GM12878 (cell line): ENCODE measurements at regions of chr16 and their contacts with region 1.

Region 1: DNA sequence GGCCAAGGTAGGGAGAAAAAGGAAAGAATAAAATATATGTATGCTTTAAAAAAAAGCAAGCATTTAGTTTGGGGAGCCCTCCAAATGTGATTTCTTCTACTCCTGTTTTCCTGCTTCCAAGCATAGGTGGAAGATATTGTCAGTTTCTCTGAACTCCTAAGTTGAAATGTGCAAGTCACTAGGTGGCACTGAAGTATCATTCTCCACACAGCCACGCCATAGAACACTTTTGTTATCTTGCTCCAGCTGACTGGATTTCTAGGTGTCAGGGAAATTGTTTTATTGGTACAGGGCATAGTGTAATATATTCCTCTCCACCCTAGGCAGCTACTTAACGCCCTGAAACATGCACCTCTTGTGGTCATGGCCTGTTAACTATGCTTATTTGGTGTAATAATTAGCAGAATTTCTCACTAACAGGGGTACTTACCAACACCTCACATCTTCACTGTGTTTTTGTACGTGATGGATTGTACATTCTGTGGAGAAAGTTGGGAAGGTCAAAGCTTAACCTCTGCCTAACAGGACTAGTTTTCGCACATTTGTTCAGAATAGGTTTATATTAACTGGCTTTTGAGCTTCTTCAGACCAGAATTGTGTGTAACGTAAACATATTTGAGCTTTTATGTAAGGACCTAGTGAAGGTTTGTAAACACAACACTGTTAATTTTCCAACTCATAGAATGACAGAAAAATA is 69.3 kb downstream of the FTO start:
- DNase-seq: peak; percentile 13
- ATAC-seq: peak; percentile 79
- H3K4me3 ChIP-seq: no peak overlapping the region
- H3K27ac ChIP-seq: no peak overlapping the region
- H3K4me1 ChIP-seq: peaks cover 6% of the 10 kb centered on the region
- H3K27me3 ChIP-seq: no peaks in the 10 kb centered on the region
- CTCF ChIP-seq: peak; percentile 41 to 70 (median 50); a peak in 4 of 6 replicates
- EP300 ChIP-seq: no peak
- POLR2A ChIP-seq: no peak
- RAD21 ChIP-seq: peak; percentile 84

Region 2: GRCh38 chr16:53369921-53370320 is 403.4 kb before region 1 on chr16:
- CTCF ChIA-PET with region 1: no interaction called
- POLR2A ChIA-PET with region 1: no interaction called
- RAD21 ChIA-PET with region 1: no interaction called
- SMC1A ChIA-PET with region 1: no interaction called
- in situ Hi-C with region 1: no loop called
- intact Hi-C with region 1: no loop called
- DNase-seq: no peak
- ATAC-seq: no peak
- H3K4me3 ChIP-seq: no peak overlapping the region
- H3K27ac ChIP-seq: no peak overlapping the region
- H3K4me1 ChIP-seq: no peaks in the 10 kb centered on the region
- H3K27me3 ChIP-seq: no peaks in the 10 kb centered on the region; a peak in 1 of 4 replicates
- CTCF ChIP-seq: no peak
- EP300 ChIP-seq: no peak
- POLR2A ChIP-seq: no peak
- RAD21 ChIP-seq: no peak

Region 3: DNA sequence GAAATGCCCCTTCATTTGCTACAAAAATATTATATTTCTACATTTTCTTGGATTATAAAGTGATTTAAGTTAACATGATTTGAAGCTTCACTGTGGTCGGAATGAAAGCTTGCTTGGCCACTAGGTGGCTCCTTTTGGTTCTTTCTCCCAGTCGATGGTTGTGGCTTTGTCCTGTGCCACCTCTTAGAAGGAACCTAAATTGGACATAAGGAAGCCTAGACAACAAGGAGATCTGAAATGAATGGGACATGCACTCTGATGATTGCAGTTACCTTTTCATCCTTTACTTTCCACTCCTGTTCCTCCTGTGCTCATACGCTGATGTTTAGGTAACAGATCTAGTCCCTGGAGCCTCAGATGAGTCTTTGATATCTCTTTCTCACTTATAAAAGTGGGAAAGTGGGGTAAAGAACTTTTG is 30.1 kb before region 1 on chr16:
- CTCF ChIA-PET with region 1: interaction called, 19 read pairs
- POLR2A ChIA-PET with region 1: no interaction called
- RAD21 ChIA-PET with region 1: no interaction called
- SMC1A ChIA-PET with region 1: interaction called, 9 read pairs
- in situ Hi-C with region 1: no loop called
- intact Hi-C with region 1: no loop called
- DNase-seq: no peak
- ATAC-seq: peak; percentile 67
- H3K4me3 ChIP-seq: no peak overlapping the region
- H3K27ac ChIP-seq: no peak overlapping the region
- H3K4me1 ChIP-seq: peaks cover 4% of the 10 kb centered on the region
- H3K27me3 ChIP-seq: no peaks in the 10 kb centered on the region
- CTCF ChIP-seq: peak; percentile 47 to 70 (median 69)
- EP300 ChIP-seq: no peak
- POLR2A ChIP-seq: no peak
- RAD21 ChIP-seq: peak; percentile 39

Region 4: GRCh38 chr16:53755536-53755910 is 17.8 kb before region 1 on chr16:
- CTCF ChIA-PET with region 1: interaction called, 13 read pairs
- POLR2A ChIA-PET with region 1: no interaction called
- RAD21 ChIA-PET with region 1: interaction called, 3 read pairs
- SMC1A ChIA-PET with region 1: interaction called, 5 read pairs
- in situ Hi-C with region 1: no loop called
- intact Hi-C with region 1: no loop called
- DNase-seq: no peak
- ATAC-seq: no peak
- H3K4me3 ChIP-seq: no peak overlapping the region
- H3K27ac ChIP-seq: no peak overlapping the region
- H3K4me1 ChIP-seq: no peaks in the 10 kb centered on the region
- H3K27me3 ChIP-seq: no peaks in the 10 kb centered on the region
- CTCF ChIP-seq: no peak
- EP300 ChIP-seq: no peak
- POLR2A ChIP-seq: no peak
- RAD21 ChIP-seq: no peak

Region 5: GRCh38 chr16:53785044-53785443 is 11.7 kb after region 1 on chr16:
- CTCF ChIA-PET with region 1: interaction called, 6 read pairs
- POLR2A ChIA-PET with region 1: no interaction called
- RAD21 ChIA-PET with region 1: interaction called, 3 read pairs
- SMC1A ChIA-PET with region 1: interaction called, 10 read pairs
- in situ Hi-C with region 1: no loop called
- intact Hi-C with region 1: no loop called
- DNase-seq: no peak
- ATAC-seq: no peak
- H3K4me3 ChIP-seq: no peak overlapping the region
- H3K27ac ChIP-seq: no peak overlapping the region
- H3K4me1 ChIP-seq: no peaks in the 10 kb centered on the region
- H3K27me3 ChIP-seq: no peaks in the 10 kb centered on the region
- CTCF ChIP-seq: no peak
- EP300 ChIP-seq: no peak
- POLR2A ChIP-seq: no peak
- RAD21 ChIP-seq: no peak

Region 6: GRCh38 chr16:53892155-53892554 is 118.9 kb after region 1 on chr16:
- CTCF ChIA-PET with region 1: interaction called, 9 read pairs
- POLR2A ChIA-PET with region 1: no interaction called
- RAD21 ChIA-PET with region 1: interaction called, 4 read pairs
- SMC1A ChIA-PET with region 1: no interaction called
- in situ Hi-C with region 1: no loop called
- intact Hi-C with region 1: loop called (anchors 5 kb)
- DNase-seq: no peak
- ATAC-seq: peak; percentile 82
- H3K4me3 ChIP-seq: no peak overlapping the region
- H3K27ac ChIP-seq: no peak overlapping the region
- H3K4me1 ChIP-seq: no peaks in the 10 kb centered on the region
- H3K27me3 ChIP-seq: no peaks in the 10 kb centered on the region
- CTCF ChIP-seq: peak; percentile 52 to 61 (median 59)
- EP300 ChIP-seq: no peak
- POLR2A ChIP-seq: no peak
- RAD21 ChIP-seq: peak; percentile 71

Region 7: DNA sequence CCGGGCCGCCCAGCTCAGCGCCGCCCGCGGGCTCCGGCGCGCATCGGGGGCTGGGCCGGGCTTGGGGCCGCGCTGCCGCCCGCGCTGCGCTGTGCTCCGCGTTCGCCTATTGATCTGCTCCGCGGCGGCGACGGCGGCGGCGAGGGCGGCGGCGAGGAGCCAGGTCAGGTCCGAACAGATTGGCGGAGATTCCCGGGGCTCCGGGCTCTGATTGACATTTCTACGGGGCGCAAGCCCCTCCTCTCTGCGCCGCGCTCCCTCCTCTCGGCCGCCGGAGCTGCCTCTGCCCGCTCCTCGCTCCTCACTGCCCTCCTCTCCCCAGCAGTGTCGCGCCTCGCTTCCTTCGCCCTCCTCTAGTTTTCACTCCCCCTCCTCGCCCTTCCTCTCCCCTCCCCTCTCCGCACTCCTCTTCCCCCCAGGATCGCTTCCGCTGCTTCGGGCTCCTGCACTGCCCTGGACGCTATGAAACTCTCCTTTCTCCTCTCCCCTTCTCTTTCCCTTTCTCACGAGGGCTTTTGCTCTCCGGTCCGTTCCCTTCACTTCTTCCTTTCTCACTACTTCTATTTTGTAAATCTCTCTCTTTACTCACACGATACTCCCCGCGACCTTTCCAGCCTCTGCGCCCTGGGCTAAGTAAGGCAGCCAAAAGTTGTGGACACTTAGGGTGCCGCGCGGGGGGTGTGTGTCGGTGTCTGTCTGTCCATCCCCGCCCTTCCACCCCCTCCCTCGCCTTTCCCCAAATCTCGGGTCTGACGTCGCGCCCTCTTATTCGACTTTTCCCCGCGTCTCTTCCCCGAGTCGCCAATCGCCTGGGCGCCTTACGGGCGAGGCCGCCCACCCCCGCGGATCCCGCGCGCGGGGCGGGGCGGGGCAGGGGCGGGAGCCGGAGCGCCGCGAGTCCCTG is 513.0 kb after region 1 on chr16 and contains the start of gene IRX3:
- CTCF ChIA-PET with region 1: no interaction called
- POLR2A ChIA-PET with region 1: no interaction called
- RAD21 ChIA-PET with region 1: no interaction called
- SMC1A ChIA-PET with region 1: no interaction called
- in situ Hi-C with region 1: no loop called
- intact Hi-C with region 1: loop called (anchors 10 kb)
- DNase-seq: no peak
- ATAC-seq: no peak
- H3K4me3 ChIP-seq: no peak within 1 kb of the TSS
- H3K27ac ChIP-seq: no peak within 1 kb of the TSS
- H3K4me1 ChIP-seq: no peaks in the 10 kb centered on the region
- H3K27me3 ChIP-seq: peaks cover 7 to 11% of the 10 kb centered on the region in 2 experiments
- CTCF ChIP-seq: no peak
- EP300 ChIP-seq: no peak
- POLR2A ChIP-seq: no peak; the same call in 1 of the 2 replicates
- RAD21 ChIP-seq: no peak
- polyA plus RNA-seq, gene IRX3: not detected